Motor neuron (in vitro differentiated cells): ENCODE measurements at regions of chr6 and their contacts with region 1.

Region 1: GRCh38 chr6:132218059-132218696 is 183.1 kb downstream of the MOXD1 start:
- ATAC-seq: peak in 1 of 8 experiments; percentile 26
- H3K4me3 ChIP-seq: no peak overlapping the region
- H3K27ac ChIP-seq: no peak overlapping the region
- H3K4me1 ChIP-seq: no peaks in the 10 kb centered on the region

Region 2: DNA sequence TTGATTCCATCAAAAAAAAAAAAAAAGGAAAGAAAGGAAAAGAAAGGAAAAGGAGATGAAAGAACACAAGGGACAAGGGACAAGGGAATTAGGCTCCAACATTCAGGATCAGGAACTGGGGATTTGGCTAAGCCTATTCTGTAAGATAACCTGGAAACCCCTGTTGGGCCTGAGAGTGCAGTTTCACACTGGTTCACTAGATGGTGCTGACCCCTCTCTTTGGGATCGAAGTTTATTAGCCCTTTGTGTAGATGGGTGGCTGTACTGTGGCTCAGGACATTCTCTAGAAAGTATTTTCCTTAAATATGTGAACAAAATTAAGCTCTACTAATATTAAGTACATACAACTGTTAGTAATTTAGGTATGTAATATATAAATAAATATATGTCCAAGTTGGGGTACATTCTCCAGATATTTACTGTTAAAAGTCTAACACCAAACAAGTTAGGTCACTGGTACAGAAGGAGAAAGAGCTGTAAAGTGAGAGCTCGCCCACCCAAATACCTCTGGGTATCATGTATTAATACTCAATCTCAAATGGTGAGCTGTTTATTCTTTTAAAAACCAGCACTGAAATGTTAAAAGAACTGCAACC is 523.2 kb before region 1 on chr6:
- in situ Hi-C with region 1: loop called in 1 of 9 experiments (anchors 25 kb)
- ATAC-seq: peak; percentile 60 to 99 (median 86)
- H3K4me3 ChIP-seq: no peak overlapping the region
- H3K27ac ChIP-seq: no peak overlapping the region
- H3K4me1 ChIP-seq: no peaks in the 10 kb centered on the region

Region 3: DNA sequence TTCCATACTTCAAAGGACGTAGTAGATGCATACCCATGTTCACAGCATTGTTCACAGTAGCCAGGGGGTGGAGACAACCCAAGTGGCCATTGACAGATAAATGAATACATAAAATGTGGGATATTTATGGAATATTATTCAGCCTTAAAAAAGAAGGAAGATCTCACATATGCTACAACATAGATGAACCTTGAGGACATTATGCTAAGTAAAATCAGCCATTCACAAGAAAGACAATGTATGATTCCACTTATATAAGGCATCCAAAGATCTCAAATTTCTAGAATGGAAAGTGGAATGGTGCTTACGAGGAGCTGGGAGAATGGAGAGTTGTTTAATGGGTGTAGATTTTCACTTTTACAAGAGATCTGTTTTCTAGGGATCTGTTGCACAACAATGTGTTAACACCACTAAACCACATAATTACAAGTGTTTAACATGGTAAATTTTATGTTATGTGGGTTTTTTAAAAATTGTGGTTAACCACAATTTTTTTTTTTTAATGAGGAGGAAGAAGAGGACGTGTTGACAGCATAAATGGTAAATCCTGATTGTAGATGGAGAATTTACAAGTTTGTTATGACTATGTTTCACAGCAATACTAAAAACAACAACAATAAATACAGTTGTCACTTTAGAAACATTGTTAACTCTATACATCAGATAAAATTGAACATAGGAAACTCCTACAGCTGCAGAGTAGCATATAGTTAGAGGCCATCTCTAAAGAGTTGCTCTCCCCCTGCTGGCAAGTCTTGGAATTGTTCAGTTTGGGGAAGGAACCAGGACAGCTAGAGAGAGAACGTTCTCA is 308.6 kb before region 1 on chr6:
- in situ Hi-C with region 1: loop called in 3 of 9 experiments (anchors 25 kb)
- ATAC-seq: peak; percentile 74 to 97 (median 84)
- H3K4me3 ChIP-seq: no peak overlapping the region
- H3K27ac ChIP-seq: no peak overlapping the region
- H3K4me1 ChIP-seq: peaks cover 0 to 6% of the 10 kb centered on the region in 2 donors

Region 4: GRCh38 chr6:131949909-131950766 is 268.0 kb before region 1 on chr6:
- in situ Hi-C with region 1: loop called in 1 of 9 experiments (anchors 25 kb)
- ATAC-seq: peak; percentile 27 to 78 (median 70)
- H3K4me3 ChIP-seq: peak overlapping the region; percentile 47 to 77 (median 56)
- H3K27ac ChIP-seq: peak overlapping the region in 1 of 2 donors; percentile 38
- H3K4me1 ChIP-seq: peaks cover 19 to 36% of the 10 kb centered on the region in 2 donors

Region 5: GRCh38 chr6:133040803-133041419 is 822.7 kb after region 1 on chr6:
- in situ Hi-C with region 1: no loop called
- ATAC-seq: peak in 7 of 8 experiments; percentile 35 to 99 (median 69)
- H3K4me3 ChIP-seq: no peak overlapping the region
- H3K27ac ChIP-seq: no peak overlapping the region
- H3K4me1 ChIP-seq: peaks cover 0 to 9% of the 10 kb centered on the region in 2 donors